HEK293 (cell line): ENCODE measurements at regions of chr12 and their contacts with region 1.

Region 1: DNA sequence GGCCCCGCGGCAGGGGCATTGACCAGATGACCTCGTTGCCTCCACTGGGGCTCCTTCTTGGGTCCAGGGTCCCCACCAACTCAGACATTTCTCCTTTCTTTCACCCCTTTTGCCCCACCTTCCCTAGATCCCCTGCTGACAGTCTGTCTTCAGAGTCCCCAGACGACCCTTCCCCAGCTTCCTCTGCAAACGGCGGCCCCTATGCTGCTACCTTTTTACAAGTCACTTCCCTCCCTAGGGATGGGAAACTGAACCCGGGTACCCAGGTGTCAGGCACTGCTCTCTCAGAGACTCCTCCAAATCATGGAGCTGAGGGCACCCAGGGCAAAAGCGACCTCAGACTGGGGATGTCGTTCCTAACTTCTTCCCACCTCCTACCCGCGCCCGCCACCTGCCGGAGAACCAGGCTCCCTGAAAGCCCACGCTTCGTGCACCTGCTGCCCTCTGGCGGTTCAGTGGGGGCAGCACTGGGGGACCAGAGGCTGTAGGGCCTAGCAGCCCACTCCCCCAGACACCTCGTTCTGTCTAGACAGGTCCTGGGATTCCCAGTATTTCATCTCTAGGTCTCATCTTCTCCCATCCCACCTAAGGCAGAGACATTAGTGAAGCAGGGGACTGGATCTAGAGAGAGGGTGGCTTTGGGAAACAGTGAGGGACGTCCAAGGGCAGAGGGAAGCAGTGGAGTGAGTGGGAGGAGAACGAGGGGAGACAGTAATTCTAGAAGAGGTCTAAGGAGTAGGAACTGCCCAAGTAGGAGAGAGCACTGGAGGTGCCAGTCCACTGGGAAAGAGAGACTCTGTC is 4.9 kb downstream of the ZNF385A start:
- H3K4me3 ChIP-seq: peak overlapping the region; percentile 42
- H3K27ac ChIP-seq: no peak overlapping the region; the same call in 1 of the 2 replicates
- H3K4me1 ChIP-seq: peaks cover 6% of the 10 kb centered on the region
- CTCF ChIP-seq: peak; percentile 100

Region 2: DNA sequence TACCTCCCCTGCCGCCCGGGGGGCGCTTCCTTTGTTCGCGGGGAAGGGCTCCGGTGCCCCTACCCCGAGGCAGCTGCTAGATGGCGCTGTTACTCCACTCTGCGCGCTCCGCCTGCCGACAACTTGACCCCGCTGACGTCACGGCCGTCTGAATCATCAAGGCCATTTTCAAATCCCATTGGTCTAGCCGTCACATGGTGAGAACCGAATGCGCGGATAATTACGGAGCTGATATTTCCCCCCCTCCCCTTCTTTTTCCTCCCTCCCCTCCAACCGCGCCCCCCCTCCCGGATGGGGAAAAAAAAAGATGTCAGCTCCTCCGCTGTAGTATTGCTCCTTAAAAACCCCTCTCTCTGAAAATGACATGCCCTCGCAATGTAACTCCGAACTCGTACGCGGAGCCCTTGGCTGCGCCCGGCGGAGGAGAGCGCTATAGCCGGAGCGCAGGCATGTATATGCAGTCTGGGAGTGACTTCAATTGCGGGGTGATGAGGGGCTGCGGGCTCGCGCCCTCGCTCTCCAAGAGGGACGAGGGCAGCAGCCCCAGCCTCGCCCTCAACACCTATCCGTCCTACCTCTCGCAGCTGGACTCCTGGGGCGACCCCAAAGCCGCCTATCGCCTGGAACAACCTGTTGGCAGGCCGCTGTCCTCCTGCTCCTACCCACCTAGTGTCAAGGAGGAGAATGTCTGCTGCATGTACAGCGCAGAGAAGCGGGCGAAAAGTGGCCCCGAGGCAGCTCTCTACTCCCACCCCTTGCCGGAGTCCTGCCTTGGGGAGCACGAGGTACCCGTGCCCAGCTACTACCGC is 394.5 kb before region 1 on chr12 and contains the start of gene HOXC10:
- CTCF ChIA-PET with region 1: interaction called, 17 read pairs
- POLR2A ChIA-PET with region 1: no interaction called
- H3K4me3 ChIP-seq: peak within 1 kb of the TSS; percentile 32
- H3K27ac ChIP-seq: peak within 1 kb of the TSS; percentile 90
- H3K4me1 ChIP-seq: peaks cover 25% of the 10 kb centered on the region
- CTCF ChIP-seq: peak; percentile 81

Region 3: GRCh38 chr12:54046809-54047159 is 332.8 kb before region 1 on chr12:
- CTCF ChIA-PET with region 1: no interaction called
- POLR2A ChIA-PET with region 1: no interaction called
- H3K4me3 ChIP-seq: no peak overlapping the region
- H3K27ac ChIP-seq: no peak overlapping the region
- H3K4me1 ChIP-seq: peaks cover 58% of the 10 kb centered on the region
- CTCF ChIP-seq: no peak

Region 4: DNA sequence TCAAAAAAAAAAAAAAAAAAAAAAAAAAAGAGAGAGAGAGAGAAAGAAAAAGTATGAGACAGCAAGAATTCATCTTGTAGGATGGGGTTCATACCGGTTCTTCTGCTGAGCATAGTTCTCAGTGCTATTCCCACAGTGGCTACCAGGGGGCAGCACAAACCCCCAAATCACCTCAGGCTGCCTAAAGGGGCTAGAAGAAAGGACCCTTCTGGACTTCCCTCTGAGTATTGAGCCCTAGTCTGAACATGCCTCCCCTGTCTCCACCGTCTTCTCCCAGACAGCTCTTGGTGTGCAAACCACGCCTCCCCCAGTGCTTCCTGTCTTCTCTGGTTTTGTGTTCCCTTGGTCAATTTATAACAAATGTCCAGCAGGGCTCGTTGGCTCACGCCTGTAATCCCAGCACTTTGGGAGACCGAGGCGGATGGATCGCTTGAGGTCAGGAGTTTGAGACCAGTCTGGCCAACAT is 159.5 kb before region 1 on chr12:
- CTCF ChIA-PET with region 1: interaction called, 36 read pairs
- POLR2A ChIA-PET with region 1: interaction called, 3 read pairs
- H3K4me3 ChIP-seq: no peak overlapping the region
- H3K27ac ChIP-seq: no peak overlapping the region
- H3K4me1 ChIP-seq: no peaks in the 10 kb centered on the region; the same call in 1 of the 2 replicates
- CTCF ChIP-seq: peak; percentile 84

Region 5: DNA sequence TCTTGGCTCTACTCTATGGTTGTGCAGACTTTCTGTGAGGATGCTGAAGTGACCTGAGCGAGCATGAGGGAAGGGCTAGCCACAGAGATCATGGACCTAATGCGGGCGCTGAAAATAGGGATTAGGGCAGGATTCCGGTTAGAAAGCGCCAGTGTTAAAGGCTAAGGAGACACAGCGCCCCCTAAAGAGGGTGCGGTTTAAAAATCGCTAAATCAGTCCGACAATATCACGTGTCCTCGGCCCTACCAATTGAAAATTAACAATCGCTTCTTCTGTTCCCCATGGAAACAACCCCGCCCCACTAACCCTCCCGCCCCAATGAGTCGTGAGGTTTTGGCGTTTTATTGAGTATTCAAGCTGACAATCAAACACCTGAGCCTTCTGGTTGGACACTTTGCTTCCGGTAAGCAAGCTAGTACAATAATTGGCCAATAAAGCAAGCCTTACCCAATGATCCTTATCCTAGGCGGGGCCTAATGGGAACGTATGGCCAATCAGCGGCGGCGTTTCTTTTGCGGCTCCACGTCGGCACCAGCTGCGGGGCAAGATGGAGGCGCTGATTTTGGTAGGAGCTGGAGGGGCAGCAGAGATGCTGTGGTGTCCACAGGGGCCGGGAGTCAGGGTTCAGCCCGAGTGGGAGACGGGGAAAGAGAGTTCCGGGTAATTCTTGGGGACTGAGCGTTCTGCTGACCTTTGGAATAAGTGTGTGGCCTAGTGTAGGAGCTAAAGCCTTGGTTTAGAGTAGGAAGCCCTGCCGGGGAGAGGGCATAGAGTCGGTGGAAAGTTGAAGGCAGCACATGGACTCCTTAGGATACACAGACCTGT is 54.8 kb before region 1 on chr12 and contains the start of gene COPZ1:
- CTCF ChIA-PET with region 1: interaction called, 10 read pairs
- POLR2A ChIA-PET with region 1: no interaction called
- H3K4me3 ChIP-seq: peak within 1 kb of the TSS; percentile 88
- H3K27ac ChIP-seq: peak within 1 kb of the TSS; percentile 70
- H3K4me1 ChIP-seq: no peaks in the 10 kb centered on the region; the same call in 1 of the 2 replicates
- CTCF ChIP-seq: peak; percentile 84

Region 6: GRCh38 chr12:54359033-54359761 is 20.4 kb before region 1 on chr12:
- CTCF ChIA-PET with region 1: interaction called, 40 read pairs
- POLR2A ChIA-PET with region 1: interaction called, 9 read pairs
- H3K4me3 ChIP-seq: peak overlapping the region; percentile 62
- H3K27ac ChIP-seq: peak overlapping the region; percentile 80
- H3K4me1 ChIP-seq: peaks cover 12% of the 10 kb centered on the region
- CTCF ChIP-seq: no peak

Region 7: DNA sequence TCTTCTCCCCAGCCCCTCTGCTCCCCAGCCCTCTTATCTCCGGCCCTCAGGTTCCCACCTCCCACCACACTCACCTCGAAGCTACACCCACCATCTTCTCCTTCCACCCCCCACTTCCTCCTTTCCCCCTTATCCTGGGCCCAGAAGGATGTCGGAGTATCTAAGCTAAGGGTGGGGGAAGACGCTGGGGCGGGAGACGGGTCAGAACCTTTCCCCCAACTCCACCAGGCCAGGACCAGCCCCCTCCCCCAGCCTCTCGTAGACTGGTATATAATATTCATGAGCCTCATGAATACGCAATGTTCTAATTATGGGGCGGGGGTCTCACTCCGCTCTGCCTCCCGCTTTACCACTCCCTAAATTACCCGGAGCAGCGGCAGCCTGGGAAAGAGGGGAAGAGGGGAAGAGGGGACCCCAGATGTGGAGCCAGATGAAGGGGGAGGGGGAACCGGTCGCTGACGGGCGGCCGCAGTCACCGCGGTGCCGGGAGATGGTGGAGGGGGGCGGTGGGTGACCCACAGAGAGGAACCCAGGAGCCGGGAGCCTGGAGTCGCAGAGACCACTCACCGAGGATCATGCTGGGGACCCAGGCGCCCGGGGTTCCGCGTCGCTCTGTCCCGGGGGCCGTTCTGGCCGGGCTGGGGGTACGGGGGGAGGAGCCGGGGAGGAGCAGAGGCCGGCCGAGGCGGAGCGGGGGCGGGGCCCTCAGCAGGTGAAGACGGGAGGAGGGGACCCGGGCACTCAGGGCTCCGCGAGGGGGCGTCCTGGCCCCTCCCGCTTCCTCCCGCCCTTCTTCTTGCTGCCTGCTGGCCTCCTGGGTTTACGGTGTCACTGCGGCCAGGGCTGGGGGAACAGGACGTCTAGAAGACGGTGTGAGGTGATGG is 11.3 kb after region 1 on chr12:
- CTCF ChIA-PET with region 1: interaction called, 77 read pairs
- POLR2A ChIA-PET with region 1: interaction called, 3 read pairs
- H3K4me3 ChIP-seq: peak overlapping the region; percentile 53
- H3K27ac ChIP-seq: peak overlapping the region; percentile 44; the same call in 1 of the 2 replicates
- H3K4me1 ChIP-seq: peaks cover 21% of the 10 kb centered on the region
- CTCF ChIP-seq: peak; percentile 91

Region 8: DNA sequence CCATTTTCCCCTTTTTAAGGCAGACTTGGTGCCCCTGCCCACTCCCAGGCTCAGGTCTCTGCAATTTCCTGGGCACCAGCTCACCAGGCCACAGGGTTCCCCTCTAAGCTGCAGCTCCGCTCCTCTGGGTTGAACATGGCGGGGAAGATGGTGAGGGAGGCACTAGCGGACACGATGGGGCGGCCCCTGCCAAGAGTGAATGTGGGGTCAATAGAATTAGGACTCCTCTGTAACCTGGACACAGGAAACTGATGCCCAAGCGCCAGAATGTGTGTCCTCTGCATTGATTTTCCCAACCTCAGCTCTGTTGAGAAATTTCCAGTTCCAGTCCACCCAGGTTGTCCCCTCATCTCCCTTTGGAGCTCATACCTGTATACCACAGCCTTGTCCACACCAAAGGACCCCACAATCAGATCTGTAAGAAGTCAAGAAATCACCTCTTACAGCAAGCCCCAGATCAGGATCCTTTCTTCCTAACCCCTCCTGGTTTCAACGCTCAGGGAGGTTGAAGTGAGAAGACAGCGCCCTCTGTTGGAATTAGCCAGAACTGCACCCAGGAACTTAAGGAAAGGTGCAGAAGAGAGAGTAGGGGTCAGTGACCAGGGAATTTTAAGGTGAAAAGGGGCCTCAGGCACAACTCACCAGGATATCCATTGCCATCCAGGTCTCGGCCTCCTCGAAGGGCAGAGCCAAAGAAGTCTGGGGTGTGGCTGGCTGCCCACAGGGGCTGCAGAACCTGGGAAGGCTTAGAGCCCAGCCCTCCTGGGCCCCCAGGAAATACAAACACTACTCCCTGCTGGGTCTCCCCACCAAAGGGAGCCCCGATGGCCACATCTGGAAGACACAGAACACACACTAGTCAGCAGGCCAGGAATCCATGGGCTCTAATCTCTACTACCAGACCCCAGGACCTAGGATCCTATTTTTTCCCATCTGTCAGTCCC is 24.7 kb after region 1 on chr12:
- CTCF ChIA-PET with region 1: interaction called, 77 read pairs
- POLR2A ChIA-PET with region 1: interaction called, 3 read pairs
- H3K4me3 ChIP-seq: no peak overlapping the region
- H3K27ac ChIP-seq: no peak overlapping the region
- H3K4me1 ChIP-seq: no peaks in the 10 kb centered on the region
- CTCF ChIP-seq: peak; percentile 84